Right ventricle myocardium inferior (tissue), 1 donor: ENCODE measurements at regions of chr1 and their contacts with region 1.

Region 1: GRCh38 chr1:983799-984473 is 2.0 kb upstream of the PERM1 start:
- DNase-seq: peak; percentile 79
- ATAC-seq: no peak

Region 2: GRCh38 chr1:999725-1000356 is 15.9 kb after region 1 on chr1 and contains the start of gene HES4:
- intact Hi-C with region 1: loop called (anchors 1 kb)
- DNase-seq: peak; percentile 96
- ATAC-seq: peak; percentile 83
- total RNA-seq, gene HES4: 36.7 TPM

Region 3: GRCh38 chr1:1080122-1080757 is 96.3 kb after region 1 on chr1:
- intact Hi-C with region 1: no loop called
- DNase-seq: peak; percentile 79
- ATAC-seq: peak; percentile 91